AG04450 (cell line): ENCODE measurements at regions of chr3 and their contacts with region 1.

Region 1: GRCh38 chr3:4780545-4780957 is 198.7 kb upstream of the BHLHE40 start:
- DNase-seq: no peak
- H3K4me3 ChIP-seq: no peak overlapping the region
- H3K27ac ChIP-seq: peak overlapping the region; percentile 11
- H3K27me3 ChIP-seq: no peaks in the 10 kb centered on the region
- CTCF ChIP-seq: no peak

Region 2: GRCh38 chr3:4756855-4757574 is 23.5 kb before region 1 on chr3:
- CTCF ChIA-PET with region 1: no interaction called
- POLR2A ChIA-PET with region 1: no interaction called
- DNase-seq: no peak
- H3K4me3 ChIP-seq: no peak overlapping the region
- H3K27ac ChIP-seq: no peak overlapping the region
- H3K27me3 ChIP-seq: peaks cover 19% of the 10 kb centered on the region
- CTCF ChIP-seq: no peak

Region 3: DNA sequence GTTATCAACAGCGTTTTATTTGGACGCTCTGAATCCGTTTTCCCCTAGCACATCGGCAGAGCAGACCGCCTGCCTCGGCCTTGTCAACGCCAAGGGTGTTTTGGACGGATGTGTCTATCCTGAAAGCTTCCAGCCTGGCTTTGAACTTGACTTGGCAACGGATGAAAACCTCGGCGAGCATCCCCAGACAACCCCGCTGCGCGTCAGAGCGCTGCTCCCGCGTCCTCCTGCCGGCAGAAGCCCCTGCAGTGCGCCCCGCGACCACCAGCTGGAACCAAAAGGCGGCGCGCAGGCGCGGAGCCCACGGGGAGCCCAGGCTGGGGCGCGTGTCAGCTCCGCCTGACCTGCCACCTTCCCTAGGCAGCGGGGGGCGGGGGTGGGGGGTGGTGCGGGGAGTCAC is 315.3 kb after region 1 on chr3:
- CTCF ChIA-PET with region 1: interaction called, 10 read pairs
- POLR2A ChIA-PET with region 1: no interaction called
- DNase-seq: no peak
- H3K4me3 ChIP-seq: peak overlapping the region; percentile 39
- H3K27ac ChIP-seq: no peak overlapping the region
- H3K27me3 ChIP-seq: peaks cover 19% of the 10 kb centered on the region
- CTCF ChIP-seq: peak; percentile 19; the same call in 1 of the 2 replicates